Naive thymus-derived CD4-positive, alpha-beta T cell (primary cell): ENCODE measurements at regions of chr10 and their contacts with region 1.

Region 1: GRCh38 chr10:80504158-80504811 is 33.4 kb upstream of the SH2D4B start:
- DNase-seq: no peak
- ATAC-seq: peak; percentile 52
- H3K4me3 ChIP-seq: no peak overlapping the region
- H3K4me3 Mint-ChIP-seq: peak overlapping the region; percentile 24 to 86 (median 71)
- H3K27ac ChIP-seq: peak overlapping the region; percentile 59
- H3K27ac Mint-ChIP-seq: peak overlapping the region; percentile 76 to 99 (median 89)
- H3K4me1 ChIP-seq: peaks cover 64 to 69% of the 10 kb centered on the region in 2 donors
- H3K4me1 Mint-ChIP-seq: peaks cover 63 to 84% (median 75%) of the 10 kb centered on the region in 7 donors
- H3K27me3 ChIP-seq: no peaks in the 10 kb centered on the region
- H3K27me3 Mint-ChIP-seq: no peaks in the 10 kb centered on the region

Region 2: DNA sequence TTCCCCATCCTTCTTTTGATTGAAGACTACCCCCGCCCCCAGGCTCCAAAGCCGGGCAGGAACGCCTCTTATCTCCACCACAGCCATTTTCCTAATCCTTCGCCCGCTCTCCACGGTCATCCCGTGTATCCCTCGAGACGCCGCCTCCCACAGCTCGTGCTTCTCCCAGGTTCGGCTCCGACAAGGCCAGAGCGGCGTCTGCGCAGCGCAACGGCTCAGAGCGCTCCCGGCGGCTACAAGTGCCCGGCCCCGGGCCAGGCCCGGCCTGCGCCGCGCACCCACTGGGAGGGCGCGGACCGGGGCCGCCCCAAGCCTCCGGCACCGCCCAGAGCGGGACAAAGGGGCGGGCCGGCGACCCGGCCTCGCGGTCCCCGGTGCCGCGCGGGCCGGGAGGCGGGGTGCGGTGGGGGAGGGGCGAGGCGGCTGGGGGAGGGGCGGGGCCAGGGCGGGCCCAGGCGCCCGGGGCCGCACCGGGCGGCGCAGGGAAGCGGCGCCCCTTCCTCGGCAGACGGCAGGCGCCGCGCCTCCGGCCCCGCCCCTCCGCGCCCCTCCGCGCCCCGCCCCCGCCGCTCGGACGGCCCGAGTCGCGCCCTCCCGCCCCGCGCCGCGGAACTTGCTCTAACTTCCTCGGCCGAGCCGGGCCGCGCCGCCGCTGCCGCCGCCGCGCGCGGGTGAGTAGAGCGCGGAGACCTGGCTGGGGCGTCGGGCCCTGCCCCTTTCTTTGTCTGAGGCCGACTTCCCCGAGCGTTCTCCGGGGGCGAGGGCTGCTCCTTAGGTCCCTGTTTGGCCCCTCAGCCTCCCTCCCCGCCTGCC is 50.4 kb before region 1 on chr10 and contains the start of gene TSPAN14:
- CTCF ChIA-PET with region 1: interaction called, 839 read pairs
- POLR2A ChIA-PET with region 1: interaction called, 582 read pairs
- intact Hi-C with region 1: loop called (anchors 1 to 2 kb)
- DNase-seq: peak; percentile 49 to 83 (median 63)
- ATAC-seq: peak; percentile 84
- H3K4me3 ChIP-seq: peak within 1 kb of the TSS; percentile 87
- H3K4me3 Mint-ChIP-seq: peak within 1 kb of the TSS; percentile 79 to 99 (median 98)
- H3K27ac ChIP-seq: peak within 1 kb of the TSS; percentile 84
- H3K27ac Mint-ChIP-seq: peak within 1 kb of the TSS; percentile 87 to 99 (median 98)
- H3K4me1 ChIP-seq: peaks cover 23 to 27% of the 10 kb centered on the region in 2 donors
- H3K4me1 Mint-ChIP-seq: peaks cover 26 to 43% (median 38%) of the 10 kb centered on the region in 7 donors
- H3K27me3 ChIP-seq: no peaks in the 10 kb centered on the region
- H3K27me3 Mint-ChIP-seq: no peaks in the 10 kb centered on the region
- total RNA-seq, gene TSPAN14: 135 to 165 (median 160) TPM

Region 3: GRCh38 chr10:80464557-80465450 is 39.5 kb before region 1 on chr10:
- CTCF ChIA-PET with region 1: interaction called, 839 read pairs
- POLR2A ChIA-PET with region 1: interaction called, 582 read pairs
- intact Hi-C with region 1: loop called in 1 of 2 experiments (anchors 1 kb)
- DNase-seq: peak in 2 of 9 donors; percentile 46 to 47
- ATAC-seq: peak; percentile 11
- H3K4me3 ChIP-seq: peak overlapping the region; percentile 57
- H3K4me3 Mint-ChIP-seq: peak overlapping the region; percentile 79 to 99 (median 88)
- H3K27ac ChIP-seq: peak overlapping the region; percentile 84
- H3K27ac Mint-ChIP-seq: peak overlapping the region; percentile 87 to 99 (median 98)
- H3K4me1 ChIP-seq: peaks cover 88 to 97% of the 10 kb centered on the region in 2 donors
- H3K4me1 Mint-ChIP-seq: peaks cover 75 to 100% (median 95%) of the 10 kb centered on the region in 7 donors
- H3K27me3 ChIP-seq: no peaks in the 10 kb centered on the region
- H3K27me3 Mint-ChIP-seq: no peaks in the 10 kb centered on the region

Region 4: DNA sequence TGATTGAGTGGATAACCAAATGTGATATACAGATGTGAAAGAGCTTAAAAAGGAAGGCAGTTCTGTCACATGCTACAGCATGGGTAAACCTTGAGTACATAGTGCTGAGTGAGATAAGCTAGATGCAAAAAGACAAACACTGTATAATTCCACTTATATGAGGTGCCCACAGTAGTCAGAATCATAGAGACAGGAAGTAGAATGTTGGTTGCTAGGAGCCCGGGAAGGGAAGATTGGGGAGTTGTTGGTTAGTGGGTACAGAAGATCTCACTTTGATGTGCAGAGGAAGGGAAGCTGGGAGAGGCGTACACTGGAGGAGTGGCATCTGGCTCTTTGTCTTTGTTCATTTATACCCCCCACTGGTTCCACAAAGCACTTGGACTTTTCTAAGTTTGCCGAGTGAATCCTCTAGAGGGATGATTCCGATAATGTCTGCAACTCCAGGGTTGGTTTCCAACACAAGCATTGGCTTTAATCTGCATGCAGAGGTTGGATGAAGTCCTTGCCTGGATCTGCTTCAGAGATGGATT is 10.7 kb before region 1 on chr10:
- CTCF ChIA-PET with region 1: interaction called, 15 read pairs
- POLR2A ChIA-PET with region 1: interaction called, 182 read pairs
- intact Hi-C with region 1: loop called (anchors 1 to 2 kb)
- DNase-seq: peak in 6 of 9 donors; percentile 46 to 65 (median 52)
- ATAC-seq: peak; percentile 65
- H3K4me3 ChIP-seq: peak overlapping the region; percentile 2
- H3K4me3 Mint-ChIP-seq: peak overlapping the region; percentile 58 to 85 (median 74)
- H3K27ac ChIP-seq: peak overlapping the region; percentile 60
- H3K27ac Mint-ChIP-seq: peak overlapping the region; percentile 65 to 99 (median 87)
- H3K4me1 ChIP-seq: peaks cover 93 to 98% of the 10 kb centered on the region in 2 donors
- H3K4me1 Mint-ChIP-seq: peaks cover 89 to 100% (median 98%) of the 10 kb centered on the region in 7 donors
- H3K27me3 ChIP-seq: no peaks in the 10 kb centered on the region
- H3K27me3 Mint-ChIP-seq: no peaks in the 10 kb centered on the region

Region 5: GRCh38 chr10:80535671-80536365 is 31.5 kb after region 1 on chr10:
- CTCF ChIA-PET with region 1: interaction called, 9 read pairs
- POLR2A ChIA-PET with region 1: interaction called, 3 read pairs
- intact Hi-C with region 1: loop called in 1 of 2 experiments (anchors 2 kb)
- DNase-seq: peak; percentile 64 to 82 (median 78)
- ATAC-seq: peak; percentile 92
- H3K4me3 ChIP-seq: peak overlapping the region; percentile 59
- H3K4me3 Mint-ChIP-seq: peak overlapping the region; percentile 84 to 99 (median 93)
- H3K27ac ChIP-seq: peak overlapping the region; percentile 82
- H3K27ac Mint-ChIP-seq: peak overlapping the region; percentile 97 to 100 (median 99)
- H3K4me1 ChIP-seq: peaks cover 13 to 28% of the 10 kb centered on the region in 2 donors
- H3K4me1 Mint-ChIP-seq: peaks cover 17 to 42% (median 40%) of the 10 kb centered on the region in 7 donors
- H3K27me3 ChIP-seq: no peaks in the 10 kb centered on the region
- H3K27me3 Mint-ChIP-seq: no peaks in the 10 kb centered on the region